ENCODE measurements at regions of chr11 and their contacts with region 1.

Region 1: DNA sequence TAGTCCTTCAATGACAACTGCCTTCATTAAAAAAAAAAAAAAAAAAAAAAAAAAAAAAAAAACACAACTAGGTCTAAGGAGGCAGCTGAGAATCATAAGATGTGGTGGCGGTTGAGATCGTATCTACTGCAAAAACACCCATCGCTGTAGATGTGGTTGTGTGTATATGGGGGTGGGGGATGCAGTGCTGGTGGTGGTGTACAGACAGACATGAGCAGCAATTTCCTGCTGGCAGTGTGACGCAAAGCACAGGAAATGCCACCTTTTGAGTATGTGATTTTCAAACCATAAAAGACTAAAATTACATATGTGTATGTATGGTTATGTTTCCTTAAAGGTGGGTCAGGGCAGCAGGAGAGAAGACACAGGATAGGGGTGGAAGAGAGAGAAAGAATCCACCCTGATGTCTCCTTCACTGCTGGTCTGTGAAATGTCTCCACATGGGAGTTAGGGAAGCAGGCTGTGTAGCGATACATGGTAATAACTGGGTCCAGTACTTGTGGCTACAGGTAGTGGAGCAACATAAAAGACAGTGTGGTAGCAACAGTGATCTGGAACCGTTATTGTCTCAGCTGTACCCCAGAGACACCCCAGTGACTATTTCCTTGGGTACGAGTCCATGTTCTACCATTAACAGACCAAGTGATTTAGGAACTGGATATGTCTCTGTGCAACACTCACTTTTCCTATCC is 57.9 kb downstream of the SYTL2 start:
- DNase-seq: peak; percentile 44 to 99 (median 99)
- ATAC-seq: peak; percentile 95
- H3K4me3 ChIP-seq: peak overlapping the region; percentile 54
- H3K4me3 Mint-ChIP-seq: peak overlapping the region; percentile 75 to 91 (median 84)
- H3K27ac ChIP-seq: peak overlapping the region; percentile 70
- H3K27ac Mint-ChIP-seq: peak overlapping the region; percentile 90 to 99 (median 98)
- H3K4me1 ChIP-seq: peaks cover 80 to 82% of the 10 kb centered on the region in 2 donors
- H3K4me1 Mint-ChIP-seq: peaks cover 64 to 100% (median 98%) of the 10 kb centered on the region in 7 donors
- H3K27me3 ChIP-seq: no peaks in the 10 kb centered on the region
- H3K27me3 Mint-ChIP-seq: no peaks in the 10 kb centered on the region

Region 2: DNA sequence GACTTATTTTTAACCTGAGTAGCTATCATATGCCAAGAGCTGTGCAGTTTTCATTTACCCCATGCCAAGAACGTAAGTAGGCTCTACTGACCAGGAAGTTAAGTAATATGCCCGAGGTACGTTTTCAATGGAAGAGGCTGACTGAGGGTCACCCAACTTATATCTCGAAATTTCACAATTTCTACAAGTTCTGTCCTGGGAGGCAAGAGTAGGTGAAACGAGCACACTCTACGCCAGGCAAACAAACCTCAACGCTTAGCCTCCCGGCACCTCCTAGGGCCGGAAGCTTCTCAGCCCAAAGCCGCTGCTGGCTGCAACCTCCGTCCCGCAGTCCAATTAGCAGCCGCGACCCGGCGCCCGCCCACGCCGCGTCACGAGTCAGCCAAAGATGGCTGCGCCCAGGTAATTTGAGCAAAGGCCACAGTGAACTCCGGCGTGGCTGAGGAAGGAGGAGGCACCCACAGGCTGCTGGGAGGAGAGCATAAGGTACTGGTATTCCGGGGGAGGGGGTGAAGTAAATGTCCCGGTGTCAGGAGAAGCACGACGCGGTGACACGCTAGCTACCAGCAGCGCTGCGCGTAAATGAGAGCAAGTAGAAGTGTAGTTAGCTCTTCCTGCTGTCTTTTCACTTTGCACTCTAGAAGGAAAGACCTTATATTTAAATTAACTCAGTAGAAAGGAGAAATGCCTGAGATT is 105.3 kb before region 1 on chr11 and contains the start of gene TMEM126A:
- CTCF ChIA-PET with region 1: no interaction called
- POLR2A ChIA-PET with region 1: interaction called, 4 read pairs
- intact Hi-C with region 1: loop called in 1 of 2 experiments (anchors 5 kb)
- DNase-seq: peak; percentile 85 to 92 (median 90)
- ATAC-seq: peak; percentile 99
- H3K4me3 ChIP-seq: peak within 1 kb of the TSS; percentile 83
- H3K4me3 Mint-ChIP-seq: peak within 1 kb of the TSS; percentile 92 to 100 (median 98)
- H3K27ac ChIP-seq: peak within 1 kb of the TSS; percentile 87
- H3K27ac Mint-ChIP-seq: peak within 1 kb of the TSS; percentile 86 to 99 (median 98)
- H3K4me1 ChIP-seq: peaks cover 11 to 14% of the 10 kb centered on the region in 2 donors
- H3K4me1 Mint-ChIP-seq: peaks cover 9 to 48% (median 38%) of the 10 kb centered on the region in 7 donors
- H3K27me3 ChIP-seq: no peaks in the 10 kb centered on the region
- H3K27me3 Mint-ChIP-seq: peaks cover 12 to 29% (median 22%) of the 10 kb centered on the region in 5 donors
- total RNA-seq, gene TMEM126A: 17.8 to 40.8 (median 18.9) TPM

Region 3: DNA sequence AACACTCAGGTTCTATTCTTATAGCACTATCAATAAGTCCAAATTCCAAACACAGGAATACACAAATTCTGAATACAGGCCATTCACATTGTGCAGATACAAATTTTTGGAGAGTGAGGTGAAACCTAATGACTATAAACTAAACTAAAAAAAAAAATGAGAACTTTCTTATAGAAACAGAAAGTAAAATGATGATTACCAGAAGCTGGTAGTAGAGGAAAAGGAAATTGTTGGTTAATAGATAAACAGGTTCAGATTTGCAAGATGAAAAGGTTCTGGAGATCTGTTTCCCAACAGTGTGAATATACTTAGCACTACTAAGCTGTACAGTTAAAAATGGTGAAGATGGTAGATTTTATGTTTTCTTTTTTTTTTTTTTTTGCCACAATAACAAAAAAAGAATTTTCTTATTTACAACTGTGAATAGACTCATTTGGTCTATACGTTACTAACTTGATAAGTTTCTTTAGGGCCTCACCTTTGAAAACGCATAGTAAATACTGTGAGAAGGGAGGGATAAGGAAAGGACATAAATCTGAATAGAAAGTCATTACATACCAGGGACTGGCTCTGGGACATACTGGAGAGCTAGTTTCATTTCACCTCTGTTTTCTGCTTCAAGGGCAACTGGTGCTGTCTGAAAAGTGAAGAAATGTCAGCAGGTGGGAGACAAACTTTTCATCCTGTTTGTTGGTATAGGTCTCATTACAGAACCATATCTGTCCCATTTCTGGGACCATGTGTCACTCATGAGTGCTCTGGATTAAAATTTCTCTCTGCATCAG is 52.9 kb before region 1 on chr11:
- CTCF ChIA-PET with region 1: no interaction called
- POLR2A ChIA-PET with region 1: interaction called, 12 read pairs
- intact Hi-C with region 1: loop called in 1 of 2 experiments (anchors 1 kb)
- DNase-seq: peak in 4 of 9 donors; percentile 17 to 27 (median 25)
- ATAC-seq: peak; percentile 68
- H3K4me3 ChIP-seq: no peak overlapping the region
- H3K4me3 Mint-ChIP-seq: peak overlapping the region; percentile 3 to 55 (median 46)
- H3K27ac ChIP-seq: peak overlapping the region; percentile 14
- H3K27ac Mint-ChIP-seq: peak overlapping the region; percentile 33 to 82 (median 74)
- H3K4me1 ChIP-seq: peaks cover 13 to 20% of the 10 kb centered on the region in 2 donors
- H3K4me1 Mint-ChIP-seq: peaks cover 10 to 50% (median 23%) of the 10 kb centered on the region in 7 donors
- H3K27me3 ChIP-seq: no peaks in the 10 kb centered on the region
- H3K27me3 Mint-ChIP-seq: peaks cover 0 to 3% (median 0%) of the 10 kb centered on the region in 5 donors

Region 4: DNA sequence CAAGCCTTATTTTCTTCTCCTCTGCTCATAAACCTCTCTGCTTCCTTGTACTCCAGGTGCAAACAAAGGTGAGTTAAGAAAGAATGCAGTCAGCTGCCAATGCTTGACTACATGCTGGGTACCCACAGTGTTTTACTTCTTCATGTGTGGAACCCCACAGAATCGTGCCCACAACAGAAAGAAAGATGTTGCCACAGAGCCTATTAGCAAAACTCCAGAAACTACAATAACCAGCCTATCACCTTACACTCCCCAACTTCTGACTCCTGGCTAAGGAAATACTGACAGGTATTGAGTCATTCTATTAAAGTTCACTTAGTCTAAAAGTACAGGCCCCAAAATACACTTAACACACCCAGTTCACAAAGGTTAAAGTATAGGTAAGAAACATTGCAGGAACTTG is 10.2 kb before region 1 on chr11:
- CTCF ChIA-PET with region 1: interaction called, 5 read pairs
- POLR2A ChIA-PET with region 1: interaction called, 6 read pairs
- intact Hi-C with region 1: loop called (anchors 1 to 2 kb)
- DNase-seq: no peak
- ATAC-seq: peak; percentile 14
- H3K4me3 ChIP-seq: no peak overlapping the region
- H3K4me3 Mint-ChIP-seq: peak overlapping the region in 2 of 10 donors; percentile 24 to 39
- H3K27ac ChIP-seq: no peak overlapping the region
- H3K27ac Mint-ChIP-seq: peak overlapping the region in 8 of 9 donors; percentile 16 to 82 (median 41)
- H3K4me1 ChIP-seq: peaks cover 24 to 43% of the 10 kb centered on the region in 2 donors
- H3K4me1 Mint-ChIP-seq: peaks cover 27 to 92% (median 64%) of the 10 kb centered on the region in 7 donors
- H3K27me3 ChIP-seq: no peaks in the 10 kb centered on the region
- H3K27me3 Mint-ChIP-seq: no peaks in the 10 kb centered on the region

Region 5: GRCh38 chr11:85787809-85788805 is 35.1 kb after region 1 on chr11:
- CTCF ChIA-PET with region 1: interaction called, 4 read pairs
- POLR2A ChIA-PET with region 1: no interaction called
- intact Hi-C with region 1: loop called in 1 of 2 experiments (anchors 1 kb)
- DNase-seq: no peak
- ATAC-seq: no peak
- H3K4me3 ChIP-seq: no peak overlapping the region
- H3K4me3 Mint-ChIP-seq: peak overlapping the region in 1 of 10 donors; percentile 29
- H3K27ac ChIP-seq: no peak overlapping the region
- H3K27ac Mint-ChIP-seq: peak overlapping the region in 4 of 9 donors; percentile 37 to 72 (median 54)
- H3K4me1 ChIP-seq: peaks cover 0 to 5% of the 10 kb centered on the region in 2 donors
- H3K4me1 Mint-ChIP-seq: peaks cover 2 to 59% (median 35%) of the 10 kb centered on the region in 7 donors
- H3K27me3 ChIP-seq: no peaks in the 10 kb centered on the region
- H3K27me3 Mint-ChIP-seq: no peaks in the 10 kb centered on the region

Region 6: GRCh38 chr11:86047275-86047991 is 294.4 kb after region 1 on chr11:
- CTCF ChIA-PET with region 1: no interaction called
- POLR2A ChIA-PET with region 1: no interaction called
- intact Hi-C with region 1: no loop called
- DNase-seq: no peak
- ATAC-seq: peak; percentile 72
- H3K4me3 ChIP-seq: no peak overlapping the region
- H3K4me3 Mint-ChIP-seq: peak overlapping the region in 8 of 10 donors; percentile 29 to 71 (median 55)
- H3K27ac ChIP-seq: no peak overlapping the region
- H3K27ac Mint-ChIP-seq: peak overlapping the region; percentile 17 to 82 (median 69)
- H3K4me1 ChIP-seq: peaks cover 40 to 68% of the 10 kb centered on the region in 2 donors
- H3K4me1 Mint-ChIP-seq: peaks cover 57 to 100% (median 89%) of the 10 kb centered on the region in 7 donors
- H3K27me3 ChIP-seq: no peaks in the 10 kb centered on the region
- H3K27me3 Mint-ChIP-seq: no peaks in the 10 kb centered on the region

Region 7: GRCh38 chr11:86068951-86069407 is 315.9 kb after region 1 on chr11 and contains the start of gene PICALM:
- CTCF ChIA-PET with region 1: no interaction called
- POLR2A ChIA-PET with region 1: no interaction called
- intact Hi-C with region 1: loop called (anchors 1 to 2 kb)
- DNase-seq: peak; percentile 88 to 96 (median 95)
- ATAC-seq: peak; percentile 93
- H3K4me3 ChIP-seq: peak within 1 kb of the TSS; percentile 82
- H3K4me3 Mint-ChIP-seq: peak within 1 kb of the TSS; percentile 95 to 100 (median 98)
- H3K27ac ChIP-seq: peak within 1 kb of the TSS; percentile 89
- H3K27ac Mint-ChIP-seq: peak within 1 kb of the TSS; percentile 92 to 97 (median 96)
- H3K4me1 ChIP-seq: peaks cover 14 to 16% of the 10 kb centered on the region in 2 donors
- H3K4me1 Mint-ChIP-seq: peaks cover 33 to 39% (median 36%) of the 10 kb centered on the region in 7 donors
- H3K27me3 ChIP-seq: no peaks in the 10 kb centered on the region
- H3K27me3 Mint-ChIP-seq: no peaks in the 10 kb centered on the region
- total RNA-seq, gene PICALM: 96.7 to 230 (median 102) TPM

Measured in naive thymus-derived CD4-positive, alpha-beta T cell (primary cell).